Common myeloid progenitor, CD34-positive (primary cell): ENCODE measurements at regions of chr17 and their contacts with region 1.

Region 1: DNA sequence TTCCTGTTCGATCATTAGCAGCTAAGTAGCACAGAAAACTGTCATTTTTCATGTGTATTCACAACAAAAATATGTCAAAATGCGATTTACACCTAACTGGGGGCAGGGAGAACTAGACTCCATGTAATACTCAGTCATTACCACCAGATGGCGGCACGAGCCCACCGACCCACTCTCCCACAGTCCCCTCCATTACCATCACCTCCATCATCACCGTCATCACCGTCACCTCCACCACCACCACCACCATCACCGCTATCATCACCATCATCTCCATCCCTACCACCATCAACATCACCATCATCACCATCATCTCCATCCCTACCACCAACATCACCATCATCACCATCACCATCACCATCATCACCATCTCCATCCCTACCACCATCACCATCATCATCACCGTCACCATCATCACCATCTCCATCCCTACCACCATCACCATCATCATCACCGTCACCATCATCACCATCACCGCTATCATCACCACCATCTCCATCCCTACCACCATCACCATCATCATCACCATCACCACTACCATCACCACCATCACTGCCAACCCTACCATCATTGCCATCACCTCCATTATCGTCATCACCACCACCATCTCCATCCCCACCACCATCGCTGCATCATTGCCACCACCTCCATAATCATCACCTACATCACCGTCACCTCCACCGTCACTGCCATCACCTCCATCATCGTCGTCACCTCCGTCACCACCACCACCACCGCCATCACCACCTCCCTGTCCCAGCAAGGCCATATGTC is 14.4 kb downstream of the NDUFAF8 start:
- DNase-seq: peak; percentile 45 to 70 (median 57)
- H3K4me3 ChIP-seq: no peak overlapping the region
- H3K27ac ChIP-seq: no peak overlapping the region
- H3K4me1 ChIP-seq: peaks cover 0 to 9% (median 0%) of the 10 kb centered on the region in 4 experiments
- H3K27me3 ChIP-seq: no peaks in the 10 kb centered on the region

Region 2: GRCh38 chr17:81277421-81277820 is 23.9 kb after region 1 on chr17:
- CTCF ChIA-PET with region 1: no interaction called
- POLR2A ChIA-PET with region 1: no interaction called
- DNase-seq: no peak
- H3K4me3 ChIP-seq: no peak overlapping the region
- H3K27ac ChIP-seq: no peak overlapping the region
- H3K4me1 ChIP-seq: peaks cover 3 to 13% (median 9%) of the 10 kb centered on the region in 4 experiments
- H3K27me3 ChIP-seq: no peaks in the 10 kb centered on the region

Region 3: GRCh38 chr17:81537343-81537855 is 283.9 kb after region 1 on chr17:
- CTCF ChIA-PET with region 1: interaction called, 19 read pairs
- POLR2A ChIA-PET with region 1: no interaction called
- DNase-seq: peak in 2 of 3 donors; percentile 66 to 71
- H3K4me3 ChIP-seq: no peak overlapping the region
- H3K27ac ChIP-seq: no peak overlapping the region
- H3K4me1 ChIP-seq: peaks cover 0 to 19% (median 9%) of the 10 kb centered on the region in 4 experiments
- H3K27me3 ChIP-seq: peaks cover 0 to 53% (median 10%) of the 10 kb centered on the region in 5 experiments

Region 4: DNA sequence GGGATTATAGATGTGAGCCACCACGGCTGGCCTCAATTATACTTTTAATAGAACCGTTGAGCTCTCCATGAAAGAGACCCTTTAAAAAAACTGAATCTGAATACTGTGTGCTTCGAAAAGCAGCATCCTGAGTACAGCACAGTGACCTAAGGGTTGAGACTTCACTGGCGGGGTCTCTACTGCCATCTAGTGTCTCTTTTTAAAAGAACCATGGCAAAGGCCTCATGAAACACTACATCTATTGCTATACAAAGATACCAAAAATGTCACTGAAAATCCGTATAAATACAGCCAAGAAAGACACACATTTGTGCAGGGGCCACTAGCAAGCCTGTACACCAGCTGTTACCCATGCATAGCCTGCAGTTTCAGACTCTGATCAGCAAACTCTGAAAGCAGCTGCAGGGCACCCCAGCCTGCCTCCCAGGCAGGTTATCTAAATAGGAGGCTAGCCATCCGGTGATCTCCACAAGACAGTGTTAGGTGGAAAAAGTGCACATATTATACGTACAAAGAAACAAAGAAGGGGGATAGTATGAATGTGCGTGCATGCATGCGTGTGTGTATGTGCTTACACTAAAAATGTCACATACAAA is 348.1 kb after region 1 on chr17:
- CTCF ChIA-PET with region 1: interaction called, 17 read pairs
- POLR2A ChIA-PET with region 1: no interaction called
- DNase-seq: peak; percentile 65 to 86 (median 76)
- H3K4me3 ChIP-seq: no peak overlapping the region
- H3K27ac ChIP-seq: no peak overlapping the region
- H3K4me1 ChIP-seq: no peaks in the 10 kb centered on the region
- H3K27me3 ChIP-seq: no peaks in the 10 kb centered on the region